Dorsolateral prefrontal cortex (tissue), 120 donors: ENCODE measurements at regions of chr17 and their contacts with region 1.

Region 1: GRCh38 chr17:32921017-32921416 is 6.9 kb upstream of the TMEM98 start:
- DNase-seq: no peak
- H3K4me3 ChIP-seq: no peak overlapping the region
- H3K27ac ChIP-seq: no peak overlapping the region
- H3K27me3 ChIP-seq: no peaks in the 10 kb centered on the region
- CTCF ChIP-seq: no peak

Region 2: DNA sequence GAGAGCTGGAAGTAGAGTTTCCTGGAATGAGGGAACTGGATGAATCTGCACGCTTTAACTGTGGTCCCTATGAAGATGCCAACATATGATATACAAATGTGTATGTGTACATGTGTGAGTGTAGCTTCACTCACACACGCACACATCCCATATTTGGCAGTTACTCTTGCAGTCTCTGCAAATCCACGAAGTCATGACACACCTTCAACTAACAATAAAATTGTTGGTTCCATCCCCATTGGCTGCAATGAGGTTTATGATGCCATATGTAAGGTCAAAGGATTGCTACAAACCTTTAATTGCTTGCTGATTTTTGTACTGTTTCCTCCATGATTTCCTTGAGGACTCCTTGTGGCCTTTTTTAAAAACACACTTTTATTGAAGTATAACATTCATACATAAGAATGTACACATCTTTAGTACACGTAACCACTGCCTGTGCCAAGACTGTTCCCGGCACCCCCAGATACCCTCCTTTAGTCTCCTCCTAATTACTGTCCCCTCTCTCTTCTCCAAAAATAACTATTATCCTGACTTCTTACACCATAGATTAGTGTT is 66.1 kb before region 1 on chr17:
- intact Hi-C with region 1: no loop called
- DNase-seq: no peak
- H3K4me3 ChIP-seq: peak overlapping the region in 1 of 59 donors; percentile 4
- H3K27ac ChIP-seq: peak overlapping the region in 3 of 59 donors; percentile 5 to 38 (median 31)
- H3K27me3 ChIP-seq: no peaks in the 10 kb centered on the region
- CTCF ChIP-seq: no peak

Region 3: GRCh38 chr17:32870027-32870670 is 50.9 kb before region 1 on chr17:
- intact Hi-C with region 1: loop called (anchors 2 to 5 kb)
- DNase-seq: no peak
- H3K4me3 ChIP-seq: no peak overlapping the region
- H3K27ac ChIP-seq: peak overlapping the region in 21 of 59 donors; percentile 7 to 69 (median 40)
- H3K27me3 ChIP-seq: no peaks in the 10 kb centered on the region
- CTCF ChIP-seq: no peak

Region 4: GRCh38 chr17:32970281-32970680 is 49.3 kb after region 1 on chr17:
- intact Hi-C with region 1: no loop called
- DNase-seq: no peak
- H3K4me3 ChIP-seq: no peak overlapping the region
- H3K27ac ChIP-seq: no peak overlapping the region
- H3K27me3 ChIP-seq: peaks cover 0 to under 1% (median 0%) of the 10 kb centered on the region in 45 donors
- CTCF ChIP-seq: no peak